ENCODE measurements at regions of chr2 and their contacts with region 1.

Region 1: GRCh38 chr2:119694845-119695521 is 16.0 kb downstream of the TMEM177 start:
- DNase-seq: peak; percentile 66
- ATAC-seq: peak; percentile 35
- H3K4me3 ChIP-seq: peak overlapping the region in 2 of 3 experiments; percentile 29 to 54; a peak in 4 of 6 replicates
- H3K27ac ChIP-seq: peak overlapping the region; percentile 1
- H3K4me1 ChIP-seq: peaks cover 90% of the 10 kb centered on the region
- H3K27me3 ChIP-seq: no peaks in the 10 kb centered on the region
- CTCF ChIP-seq: no peak
- EP300 ChIP-seq: no peak
- POLR2A ChIP-seq: no peak
- RAD21 ChIP-seq: no peak

Region 2: DNA sequence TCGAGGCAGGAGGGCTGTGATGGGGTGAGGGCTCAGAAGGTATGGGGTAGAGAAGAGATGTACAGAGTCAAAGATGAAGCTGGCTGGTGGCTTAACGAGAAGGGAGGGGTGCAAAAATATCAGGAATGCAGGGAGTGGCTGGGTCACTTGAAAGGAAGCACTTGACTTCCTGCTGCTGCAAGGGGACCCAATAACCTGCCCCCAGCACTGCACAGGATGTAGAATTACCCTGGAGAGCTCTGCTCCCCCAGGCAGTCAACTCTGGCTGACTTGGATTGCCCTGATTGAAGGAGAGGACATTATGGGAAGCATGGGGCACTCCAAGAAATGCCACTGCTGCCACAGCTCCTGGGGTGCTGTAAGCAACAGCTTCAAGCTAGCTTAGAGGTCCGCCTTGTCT is 108.9 kb before region 1 on chr2:
- CTCF ChIA-PET with region 1: no interaction called
- POLR2A ChIA-PET with region 1: no interaction called
- in situ Hi-C with region 1: no loop called
- intact Hi-C with region 1: no loop called
- DNase-seq: no peak
- ATAC-seq: no peak
- H3K4me3 ChIP-seq: no peak overlapping the region
- H3K27ac ChIP-seq: no peak overlapping the region
- H3K4me1 ChIP-seq: peaks cover 7% of the 10 kb centered on the region
- H3K27me3 ChIP-seq: 0 out of 5 replicates have a peak, but pooled peaks cover 0 to 5% of the 10 kb centered on the region in 2 experiments
- CTCF ChIP-seq: no peak
- EP300 ChIP-seq: no peak
- POLR2A ChIP-seq: no peak
- RAD21 ChIP-seq: no peak

Region 3: DNA sequence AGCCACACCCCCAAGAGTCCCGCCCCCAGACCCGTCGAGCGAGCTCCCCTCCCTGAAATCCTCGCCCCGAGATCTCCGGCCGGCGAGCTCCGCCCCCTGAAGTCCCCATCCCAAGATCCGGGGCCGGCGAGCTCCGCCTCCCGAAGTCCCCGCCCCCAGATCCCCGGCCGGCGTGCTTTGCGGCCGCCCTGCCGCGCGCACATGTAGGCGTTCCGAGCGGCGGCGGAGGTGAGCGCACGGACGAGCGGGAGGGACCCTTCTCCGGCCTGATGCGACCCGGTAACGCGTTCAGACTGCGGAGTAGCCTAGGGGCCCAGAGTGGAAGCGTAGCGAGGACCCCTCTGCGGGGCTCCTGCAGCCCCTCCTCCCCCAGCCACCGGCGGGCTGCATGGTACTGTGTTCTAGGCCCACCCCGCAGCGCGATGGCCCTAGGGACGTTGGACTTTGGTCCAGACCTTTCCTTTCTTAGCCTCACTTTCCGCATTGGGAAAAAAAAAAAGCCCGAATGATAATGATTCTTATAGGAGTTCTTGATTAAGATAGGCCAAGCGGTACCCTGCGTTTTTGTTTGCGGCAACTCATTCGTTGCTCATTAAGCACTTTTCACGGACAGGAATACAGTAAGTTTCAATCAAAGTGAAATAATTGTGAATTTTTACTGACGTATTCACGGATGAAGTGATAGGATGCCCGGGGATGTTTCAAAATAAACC is 15.8 kb before region 1 on chr2 and contains the start of gene TMEM177:
- CTCF ChIA-PET with region 1: no interaction called
- POLR2A ChIA-PET with region 1: interaction called, 35 read pairs
- in situ Hi-C with region 1: no loop called
- intact Hi-C with region 1: no loop called
- DNase-seq: peak; percentile 87
- ATAC-seq: peak; percentile 87
- H3K4me3 ChIP-seq: peak within 1 kb of the TSS; percentile 80 to 92 (median 81)
- H3K27ac ChIP-seq: peak within 1 kb of the TSS; percentile 71
- H3K4me1 ChIP-seq: peaks cover 49% of the 10 kb centered on the region
- H3K27me3 ChIP-seq: peaks cover 3 to 12% of the 10 kb centered on the region in 2 experiments; a peak in 3 of 5 replicates
- CTCF ChIP-seq: peak; percentile 25; the same call in 1 of the 2 replicates
- EP300 ChIP-seq: no peak
- POLR2A ChIP-seq: peak; percentile 90 to 99
- RAD21 ChIP-seq: peak; percentile 56
- total RNA-seq, gene TMEM177: 44.7 and 47.9 TPM in 2 replicates